ENCODE measurements at regions of chr4 and their contacts with region 1.

Region 1: DNA sequence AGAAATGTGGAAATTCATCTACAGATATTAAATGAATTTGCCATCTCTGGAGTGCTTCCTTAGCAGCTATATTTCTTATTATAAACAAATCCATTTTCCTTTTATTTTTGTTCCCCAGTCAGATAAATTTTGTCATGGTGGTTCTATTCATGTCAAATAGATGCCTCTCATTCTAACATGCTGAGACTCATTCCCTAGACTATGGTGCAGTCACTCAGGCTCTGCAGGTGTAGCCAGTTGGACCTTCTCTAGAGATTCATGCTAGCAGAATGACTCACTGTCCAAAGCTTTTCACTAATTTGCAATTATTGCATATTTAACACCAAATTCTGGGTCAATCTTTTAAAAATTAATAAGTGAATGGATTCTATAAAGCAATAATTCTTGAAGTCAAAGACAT is 1392.7 kb downstream of the PCDH7 start:
- DNase-seq: no peak
- ATAC-seq: no peak

Region 2: DNA sequence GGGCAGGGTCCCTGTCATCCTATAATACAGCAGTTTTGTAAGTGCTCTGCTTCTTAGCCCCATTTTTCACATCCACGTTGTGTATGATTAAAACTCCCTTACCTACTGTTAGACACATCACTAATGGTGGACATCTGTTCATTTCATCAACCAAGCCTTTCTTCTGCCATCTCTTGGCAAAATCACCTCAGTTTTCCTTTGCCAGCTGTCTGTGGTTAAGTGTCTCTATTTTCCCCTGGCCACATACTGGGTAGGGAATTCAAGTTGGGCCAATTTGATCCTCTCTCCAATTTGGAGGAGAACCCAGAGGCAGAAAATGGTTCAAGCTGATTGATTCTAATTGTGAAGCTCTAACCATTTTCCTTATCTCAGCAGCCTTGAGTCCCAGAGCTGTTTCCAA is 956.7 kb before region 1 on chr4:
- intact Hi-C with region 1: no loop called
- DNase-seq: no peak
- ATAC-seq: no peak

Region 3: DNA sequence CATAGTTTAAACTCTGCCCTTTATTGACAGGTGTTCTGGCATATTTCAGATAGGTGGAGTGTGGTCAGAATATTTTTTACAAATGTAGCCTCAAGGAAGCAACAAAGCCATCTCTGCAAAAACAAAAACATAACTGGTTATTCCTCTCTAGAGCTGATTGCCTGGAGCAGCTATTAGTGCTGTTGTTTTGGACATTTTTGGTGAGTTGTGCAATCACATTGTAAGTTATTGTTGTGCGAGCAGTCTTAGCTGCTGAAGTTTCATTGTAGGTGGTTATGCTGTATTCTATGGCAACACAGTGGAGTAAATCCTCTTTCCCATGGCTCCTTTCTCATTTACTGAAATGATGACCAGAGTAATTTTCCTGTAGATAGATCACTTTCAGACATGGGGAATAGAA is 20.2 kb after region 1 on chr4:
- intact Hi-C with region 1: no loop called
- DNase-seq: no peak
- ATAC-seq: no peak

Region 4: GRCh38 chr4:32321421-32321820 is 208.5 kb after region 1 on chr4:
- intact Hi-C with region 1: loop called (anchors 5 kb)
- DNase-seq: no peak
- ATAC-seq: no peak

Region 5: GRCh38 chr4:33302321-33302720 is 1189.4 kb after region 1 on chr4:
- intact Hi-C with region 1: no loop called
- DNase-seq: no peak
- ATAC-seq: no peak

Measured in sciatic nerve (tissue), 2 donors.